Calu3 (cell line): ENCODE measurements at regions of chr20 and their contacts with region 1.

Region 1: DNA sequence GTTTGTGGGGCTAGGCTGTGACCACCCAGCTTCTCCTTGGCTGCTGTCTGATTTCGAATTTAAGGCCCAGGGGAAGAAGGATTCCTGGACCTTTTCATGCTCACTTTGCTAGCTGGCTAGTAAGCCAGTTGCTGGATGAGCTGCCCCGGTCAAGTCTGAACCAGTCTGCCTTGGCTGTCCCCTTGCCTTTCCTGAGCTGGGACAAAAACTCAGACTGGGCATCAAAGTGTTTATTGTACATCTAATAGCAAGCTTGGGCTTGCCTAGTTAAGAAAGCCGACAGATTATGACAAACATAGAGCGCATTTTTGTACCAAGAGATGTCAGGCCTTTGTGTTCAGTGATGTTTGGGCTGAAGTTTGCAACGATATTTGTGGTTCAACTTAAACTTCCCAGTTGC is 750 bp upstream of the PAK5 start:
- DNase-seq: no peak
- H3K4me3 Mint-ChIP-seq: no peak overlapping the region
- H3K27ac Mint-ChIP-seq: no peak overlapping the region
- H3K4me1 Mint-ChIP-seq: peaks cover 10% of the 10 kb centered on the region
- H3K27me3 Mint-ChIP-seq: peaks cover 55% of the 10 kb centered on the region
- CTCF ChIP-seq: no peak

Region 2: DNA sequence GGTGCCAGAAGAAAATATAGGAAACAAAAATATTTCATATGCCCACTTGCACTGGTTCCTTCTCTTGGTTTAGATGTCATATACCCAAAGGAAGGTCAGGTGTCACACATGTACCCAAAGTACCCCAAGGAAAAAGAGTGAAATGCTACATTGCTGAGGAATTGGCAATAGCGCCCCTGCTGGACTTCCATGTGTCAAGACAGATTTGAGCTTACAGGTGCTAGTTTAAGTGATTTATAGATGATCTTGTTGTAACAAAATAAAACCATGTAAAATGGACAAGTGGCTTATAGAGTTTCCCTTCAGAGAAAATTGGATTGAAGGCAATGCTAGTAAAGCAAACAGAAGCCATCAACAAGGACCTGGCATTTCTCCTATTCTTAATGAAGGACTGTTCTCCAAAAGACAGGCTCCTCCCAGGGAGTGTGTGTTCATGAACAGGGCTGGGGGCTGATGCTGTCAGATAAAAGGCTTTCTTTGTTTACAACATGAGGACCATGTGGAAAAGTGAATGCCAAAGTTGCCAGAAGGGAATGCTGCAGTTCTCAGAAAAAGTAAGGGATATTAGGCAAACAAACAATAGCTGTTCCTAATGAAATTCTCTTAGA is 63.5 kb after region 1 on chr20:
- CTCF ChIA-PET with region 1: no interaction called
- intact Hi-C with region 1: loop called (anchors 10 kb)
- DNase-seq: no peak
- H3K4me3 Mint-ChIP-seq: no peak overlapping the region
- H3K27ac Mint-ChIP-seq: no peak overlapping the region
- H3K4me1 Mint-ChIP-seq: no peaks in the 10 kb centered on the region
- H3K27me3 Mint-ChIP-seq: peaks cover 48% of the 10 kb centered on the region
- CTCF ChIP-seq: no peak